ENCODE measurements at regions of chr10 and their contacts with region 1.

Region 1: DNA sequence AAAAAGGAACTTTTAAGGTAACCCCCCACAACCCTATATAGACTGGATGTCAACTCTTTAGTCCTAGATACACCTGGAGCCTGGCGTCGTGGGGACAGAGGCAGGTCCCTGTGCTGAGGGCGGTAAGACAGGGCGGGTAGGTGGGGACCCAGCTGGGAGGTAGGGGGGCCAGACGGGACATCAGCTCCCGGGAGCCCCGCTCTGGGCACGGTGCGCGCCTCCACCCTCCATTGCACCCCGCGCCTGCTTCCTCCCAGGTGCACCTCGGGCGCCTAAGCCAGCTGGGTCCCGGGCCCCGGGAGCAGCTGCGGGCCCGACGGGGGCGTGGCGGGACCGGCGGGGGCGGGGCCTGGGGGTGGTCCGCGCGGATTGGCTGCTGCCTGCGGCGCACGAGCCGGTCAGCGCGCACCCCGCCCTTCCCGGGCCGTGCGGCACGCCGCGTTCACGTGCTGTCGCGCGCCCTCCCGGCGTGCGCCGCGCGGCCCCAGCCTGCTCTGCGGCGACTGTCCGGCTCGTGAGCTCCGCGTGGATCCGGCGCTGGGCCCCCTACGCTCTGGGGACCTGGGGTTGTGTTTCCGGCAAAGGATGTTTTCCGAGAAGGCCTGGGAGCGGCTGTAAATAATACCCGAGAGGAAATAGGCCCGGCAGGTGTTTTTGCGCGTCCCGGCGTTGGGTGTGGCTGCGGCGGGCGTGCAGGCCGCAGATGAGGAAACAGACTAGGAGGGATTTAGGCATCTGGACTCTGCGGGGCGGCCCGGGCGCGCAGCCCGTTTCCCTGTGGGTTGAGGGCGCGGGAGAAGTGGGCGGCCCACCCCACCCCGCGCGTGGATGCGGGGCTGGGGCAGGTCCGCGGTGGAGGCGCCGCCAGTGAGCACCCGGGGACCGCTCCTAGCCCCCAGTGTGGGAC is 39.1 kb upstream of the PFKFB3 start:
- DNase-seq: peak; percentile 99
- ATAC-seq: peak; percentile 97
- H3K4me3 Mint-ChIP-seq: peak overlapping the region; percentile 93
- H3K27ac Mint-ChIP-seq: peak overlapping the region; percentile 92
- H3K4me1 Mint-ChIP-seq: peaks cover 34% of the 10 kb centered on the region
- H3K27me3 Mint-ChIP-seq: no peaks in the 10 kb centered on the region

Region 2: GRCh38 chr10:6144406-6145165 is 19.0 kb before region 1 on chr10:
- POLR2A ChIA-PET with region 1: interaction called, 21 read pairs
- DNase-seq: peak; percentile 94
- ATAC-seq: peak; percentile 91
- H3K4me3 Mint-ChIP-seq: peak overlapping the region; percentile 84
- H3K27ac Mint-ChIP-seq: peak overlapping the region; percentile 74
- H3K4me1 Mint-ChIP-seq: peaks cover 63% of the 10 kb centered on the region
- H3K27me3 Mint-ChIP-seq: no peaks in the 10 kb centered on the region

Region 3: GRCh38 chr10:6151087-6151977 is 12.3 kb before region 1 on chr10:
- POLR2A ChIA-PET with region 1: interaction called, 21 read pairs
- DNase-seq: peak; percentile 67
- ATAC-seq: peak; percentile 76
- H3K4me3 Mint-ChIP-seq: peak overlapping the region; percentile 73
- H3K27ac Mint-ChIP-seq: peak overlapping the region; percentile 81
- H3K4me1 Mint-ChIP-seq: peaks cover 49% of the 10 kb centered on the region
- H3K27me3 Mint-ChIP-seq: no peaks in the 10 kb centered on the region

Measured in activated naive CD8-positive, alpha-beta T cell treated with anti-CD3 and anti-CD28 coated beads, Interleukin-2, amount 10 ng/mL, durations not matched to agents 7 days and 5 days (primary cell).